Activated CD8-positive, alpha-beta T cell treated with anti-CD3 and anti-CD28 coated beads, Interleukin-2, amount 10 ng/mL, durations not matched to agents 7 days and 5 days (primary cell): ENCODE measurements at regions of chr21 and their contacts with region 1.

Region 1: GRCh38 chr21:42449296-42449927 is 45.7 kb downstream of the UBASH3A start:
- DNase-seq: no peak
- ATAC-seq: peak; percentile 4
- H3K4me3 Mint-ChIP-seq: no peak overlapping the region
- H3K27ac Mint-ChIP-seq: peak overlapping the region; percentile 85
- H3K4me1 Mint-ChIP-seq: peaks cover 59% of the 10 kb centered on the region
- H3K27me3 Mint-ChIP-seq: no peaks in the 10 kb centered on the region

Region 2: GRCh38 chr21:42248783-42249597 is 200.4 kb before region 1 on chr21:
- CTCF ChIA-PET with region 1: no interaction called
- POLR2A ChIA-PET with region 1: no interaction called
- DNase-seq: no peak
- ATAC-seq: no peak
- H3K4me3 Mint-ChIP-seq: no peak overlapping the region
- H3K27ac Mint-ChIP-seq: no peak overlapping the region
- H3K4me1 Mint-ChIP-seq: peaks cover 8% of the 10 kb centered on the region
- H3K27me3 Mint-ChIP-seq: peaks cover 2% of the 10 kb centered on the region

Region 3: GRCh38 chr21:42337830-42338728 is 111.3 kb before region 1 on chr21:
- CTCF ChIA-PET with region 1: interaction called, 16 read pairs
- POLR2A ChIA-PET with region 1: no interaction called
- DNase-seq: peak; percentile 88
- ATAC-seq: peak; percentile 99
- H3K4me3 Mint-ChIP-seq: no peak overlapping the region
- H3K27ac Mint-ChIP-seq: peak overlapping the region; percentile 49
- H3K4me1 Mint-ChIP-seq: peaks cover 11% of the 10 kb centered on the region
- H3K27me3 Mint-ChIP-seq: peaks cover 18% of the 10 kb centered on the region

Region 4: GRCh38 chr21:42360317-42360716 is 89.1 kb before region 1 on chr21:
- CTCF ChIA-PET with region 1: interaction called, 12 read pairs
- POLR2A ChIA-PET with region 1: no interaction called
- DNase-seq: peak; percentile 43
- ATAC-seq: no peak
- H3K4me3 Mint-ChIP-seq: no peak overlapping the region
- H3K27ac Mint-ChIP-seq: no peak overlapping the region
- H3K4me1 Mint-ChIP-seq: peaks cover 10% of the 10 kb centered on the region
- H3K27me3 Mint-ChIP-seq: peaks cover 19% of the 10 kb centered on the region

Region 5: GRCh38 chr21:42513985-42514882 is 64.8 kb after region 1 on chr21:
- CTCF ChIA-PET with region 1: no interaction called
- POLR2A ChIA-PET with region 1: no interaction called
- DNase-seq: peak; percentile 68
- ATAC-seq: peak; percentile 81
- H3K4me3 Mint-ChIP-seq: peak overlapping the region; percentile 81
- H3K27ac Mint-ChIP-seq: peak overlapping the region; percentile 82
- H3K4me1 Mint-ChIP-seq: peaks cover 35% of the 10 kb centered on the region
- H3K27me3 Mint-ChIP-seq: no peaks in the 10 kb centered on the region